B cell (primary cell): ENCODE measurements at regions of chr6 and their contacts with region 1.

Region 1: DNA sequence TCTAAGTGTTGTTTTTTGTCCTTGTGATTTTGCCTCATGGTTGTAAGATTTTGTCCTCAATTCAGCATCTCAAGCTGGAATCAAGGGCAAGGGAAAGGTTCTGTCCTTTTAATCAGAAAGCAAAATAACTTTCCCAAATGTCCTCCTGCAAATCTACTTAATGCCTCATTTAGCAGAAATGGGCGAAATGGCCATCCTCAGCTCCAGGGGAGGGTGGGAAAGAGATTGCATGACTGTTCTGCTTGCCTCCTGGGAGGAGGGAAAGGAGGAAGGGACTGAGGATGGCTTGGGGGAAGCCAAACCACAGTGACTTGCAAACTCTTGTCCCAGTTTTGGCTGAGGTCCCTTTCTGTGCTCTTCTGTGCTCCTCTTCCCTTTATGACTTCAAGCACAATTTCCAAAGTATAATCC is 43.4 kb downstream of the TNFAIP3 start:
- DNase-seq: no peak
- ATAC-seq: no peak
- H3K4me3 ChIP-seq: no peak overlapping the region
- H3K4me3 Mint-ChIP-seq: no peak overlapping the region
- H3K27ac ChIP-seq: no peak overlapping the region
- H3K27ac Mint-ChIP-seq: no peak overlapping the region
- H3K4me1 ChIP-seq: peaks cover 31 to 38% of the 10 kb centered on the region in 2 donors
- H3K4me1 Mint-ChIP-seq: peaks cover 52% of the 10 kb centered on the region
- H3K27me3 ChIP-seq: no peaks in the 10 kb centered on the region
- H3K27me3 Mint-ChIP-seq: no peaks in the 10 kb centered on the region
- CTCF ChIP-seq: no peak

Region 2: DNA sequence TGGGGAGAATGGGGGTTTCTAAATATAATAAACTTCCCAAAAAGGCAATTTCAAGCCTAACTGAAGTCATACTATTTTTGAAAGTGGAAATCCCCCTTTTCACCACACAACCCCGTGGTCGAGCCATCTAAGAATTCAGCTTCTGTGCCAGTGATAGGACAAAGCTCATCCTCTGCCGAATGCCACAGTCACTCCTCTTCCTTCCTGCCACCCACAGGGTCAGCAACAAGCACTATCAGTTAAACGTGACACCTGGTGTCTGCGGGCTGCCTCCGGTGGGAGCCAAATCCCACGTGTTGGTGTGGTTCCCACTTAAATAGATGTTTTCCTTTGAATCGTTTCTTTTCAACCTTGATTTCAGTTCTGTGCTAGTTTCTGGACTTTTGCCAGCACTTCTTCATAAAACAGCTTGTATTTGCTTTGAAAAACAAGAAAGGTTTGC is 17.4 kb after region 1 on chr6:
- CTCF ChIA-PET with region 1: no interaction called
- POLR2A ChIA-PET with region 1: no interaction called
- intact Hi-C with region 1: loop called (anchors 2 kb)
- DNase-seq: peak; percentile 89
- ATAC-seq: peak; percentile 95
- H3K4me3 ChIP-seq: peak overlapping the region in 2 of 5 experiments; percentile 25 to 56
- H3K4me3 Mint-ChIP-seq: peak overlapping the region; percentile 58
- H3K27ac ChIP-seq: peak overlapping the region; percentile 84 to 87
- H3K27ac Mint-ChIP-seq: peak overlapping the region; percentile 76
- H3K4me1 ChIP-seq: peaks cover 32 to 37% of the 10 kb centered on the region in 2 donors
- H3K4me1 Mint-ChIP-seq: peaks cover 40% of the 10 kb centered on the region
- H3K27me3 ChIP-seq: no peaks in the 10 kb centered on the region
- H3K27me3 Mint-ChIP-seq: no peaks in the 10 kb centered on the region
- CTCF ChIP-seq: no peak